GM13976 (cell line): ENCODE measurements at regions of chr5 and their contacts with region 1.

Region 1: GRCh38 chr5:141992349-141992963 is 20.4 kb downstream of the GNPDA1 start:
- DNase-seq: peak; percentile 49
- CTCF ChIP-seq: peak; percentile 62

Region 2: GRCh38 chr5:141672848-141673813 is 319.3 kb before region 1 on chr5:
- in situ Hi-C with region 1: no loop called
- DNase-seq: no peak
- CTCF ChIP-seq: no peak

Region 3: GRCh38 chr5:141799507-141800167 is 192.8 kb before region 1 on chr5:
- in situ Hi-C with region 1: no loop called
- DNase-seq: no peak
- CTCF ChIP-seq: no peak

Region 4: DNA sequence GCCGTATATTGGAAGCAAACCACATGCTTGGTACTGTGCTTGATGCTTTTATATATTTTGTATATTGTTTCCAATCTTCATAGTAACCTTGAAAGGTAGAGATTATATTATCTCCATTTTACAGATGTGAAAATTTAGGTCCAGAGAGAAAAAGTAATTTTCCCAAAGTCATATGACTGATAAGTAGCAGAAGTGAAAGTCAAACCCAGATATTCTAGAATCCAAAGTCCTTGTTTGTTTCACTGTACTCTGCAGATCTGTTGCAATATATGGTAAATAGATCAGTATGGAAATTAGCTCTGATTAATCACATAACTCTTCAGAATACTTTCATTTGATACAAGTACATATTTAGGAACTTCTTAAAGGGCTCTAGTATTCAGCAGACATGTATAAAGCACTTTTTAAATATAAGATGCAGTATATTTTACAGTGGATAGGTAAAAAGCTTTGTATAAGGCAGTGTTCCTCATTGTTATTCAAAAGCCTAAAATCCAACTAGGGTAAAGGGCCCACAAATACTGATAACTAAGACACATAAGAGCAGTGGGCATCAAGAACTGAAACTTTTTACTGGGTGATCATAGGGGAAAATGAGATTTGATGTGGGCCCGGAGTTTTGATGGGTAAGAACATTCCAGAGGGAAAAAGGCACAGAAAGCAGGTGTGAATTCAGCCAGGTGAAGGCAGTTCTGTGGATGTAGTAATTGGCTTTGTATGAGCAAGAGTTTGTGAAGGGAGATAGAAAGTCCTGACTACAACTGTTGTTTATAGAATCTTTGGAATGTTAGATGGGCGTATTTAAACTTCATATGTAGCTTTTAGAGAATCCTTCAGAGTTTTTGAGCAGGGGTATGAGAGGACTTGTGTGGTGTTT is 141.1 kb after region 1 on chr5:
- in situ Hi-C with region 1: loop called (anchors 10 kb)
- DNase-seq: no peak
- CTCF ChIP-seq: no peak

Region 5: GRCh38 chr5:142151436-142152383 is 159.3 kb after region 1 on chr5:
- in situ Hi-C with region 1: no loop called
- DNase-seq: peak; percentile 53
- CTCF ChIP-seq: peak; percentile 79

Region 6: DNA sequence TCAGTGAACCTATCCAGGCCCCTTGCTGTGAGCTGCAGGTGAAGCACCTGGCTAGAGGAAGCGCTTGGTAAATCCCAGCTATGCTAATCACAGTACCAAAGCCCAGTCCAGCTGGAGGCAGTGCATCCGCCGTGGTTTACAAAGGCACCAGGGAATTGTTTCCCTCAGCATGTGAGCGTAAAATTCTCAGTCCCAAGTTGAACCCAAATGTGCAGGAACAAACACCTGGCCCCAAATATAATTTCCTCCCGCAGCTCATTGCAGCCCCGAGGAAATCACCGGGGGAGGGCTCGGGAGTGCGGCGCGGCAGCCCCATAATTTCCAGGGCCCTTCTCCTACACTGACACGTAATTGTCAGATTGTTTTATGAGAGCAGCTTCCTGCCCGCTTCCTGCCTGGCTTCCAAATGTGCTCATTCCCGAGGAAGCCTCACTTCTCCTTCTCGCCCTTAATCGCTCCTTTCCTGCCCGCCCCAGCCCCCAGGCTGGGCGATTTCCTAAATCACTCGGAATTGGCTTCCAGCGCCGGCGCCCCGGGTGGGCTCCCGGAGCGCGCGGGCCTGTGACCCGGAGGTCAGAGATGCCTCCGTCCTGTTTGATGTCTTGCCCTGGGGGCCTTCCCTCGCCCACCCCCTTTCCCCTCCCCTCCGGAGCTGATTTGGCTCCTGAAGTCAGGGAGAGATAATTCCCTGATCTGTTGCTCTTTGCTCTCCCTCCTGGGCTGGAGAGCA is 559.0 kb after region 1 on chr5:
- in situ Hi-C with region 1: loop called (anchors 25 kb)
- DNase-seq: no peak
- CTCF ChIP-seq: no peak